Activated naive CD8-positive, alpha-beta T cell treated with anti-CD3 and anti-CD28 coated beads, Interleukin-2, amount 10 ng/mL, durations not matched to agents 7 days and 5 days (primary cell): ENCODE measurements at regions of chr15 and their contacts with region 1.

Region 1: GRCh38 chr15:68053701-68054627 is at the start of gene PIAS1:
- DNase-seq: peak; percentile 94
- ATAC-seq: peak; percentile 91
- H3K4me3 Mint-ChIP-seq: peak within 1 kb of the TSS; percentile 93
- H3K27ac Mint-ChIP-seq: peak within 1 kb of the TSS; percentile 93
- H3K4me1 Mint-ChIP-seq: peaks cover 25% of the 10 kb centered on the region
- H3K27me3 Mint-ChIP-seq: peaks cover 8% of the 10 kb centered on the region
- total RNA-seq, gene PIAS1: 53.8 to 54.3 TPM

Region 2: DNA sequence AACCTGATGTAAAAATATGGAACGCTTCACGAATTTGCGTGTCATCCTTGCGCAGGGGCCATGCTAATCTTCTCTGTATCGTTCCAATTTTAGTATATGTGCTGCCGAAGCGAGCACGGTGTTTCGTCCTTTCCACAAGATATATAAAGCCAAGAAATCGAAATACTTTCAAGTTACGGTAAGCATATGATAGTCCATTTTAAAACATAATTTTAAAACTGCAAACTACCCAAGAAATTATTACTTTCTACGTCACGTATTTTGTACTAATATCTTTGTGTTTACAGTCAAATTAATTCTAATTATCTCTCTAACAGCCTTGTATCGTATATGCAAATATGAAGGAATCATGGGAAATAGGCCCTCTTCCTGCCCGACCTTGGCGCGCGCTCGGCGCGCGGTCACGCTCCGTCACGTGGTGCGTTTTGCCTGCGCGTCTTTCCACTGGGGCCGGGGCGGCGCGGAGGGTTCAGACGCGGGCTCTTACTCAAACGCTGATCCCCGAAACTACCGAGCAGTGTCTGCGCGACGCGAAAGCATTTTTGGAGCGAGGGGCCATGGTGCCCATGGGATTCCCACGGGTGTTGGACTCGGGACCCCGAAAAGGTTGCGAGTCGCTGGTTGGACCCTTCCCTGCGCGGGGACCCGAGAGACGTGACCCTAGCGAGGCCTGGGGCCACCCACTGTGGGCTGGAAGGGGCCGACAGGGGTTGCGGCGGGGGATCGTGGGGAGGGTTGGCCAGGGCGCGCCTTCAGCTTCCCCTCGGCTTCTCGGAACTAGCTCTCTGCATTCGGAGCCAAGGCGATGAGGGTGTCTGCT is 213.8 kb before region 1 on chr15 and contains the start of gene RNU6-1:
- POLR2A ChIA-PET with region 1: interaction called, 10 read pairs
- DNase-seq: peak; percentile 97
- ATAC-seq: peak; percentile 91
- H3K4me3 Mint-ChIP-seq: peak within 1 kb of the TSS; percentile 91
- H3K27ac Mint-ChIP-seq: peak within 1 kb of the TSS; percentile 95
- H3K4me1 Mint-ChIP-seq: peaks cover 25% of the 10 kb centered on the region
- H3K27me3 Mint-ChIP-seq: peaks cover 25% of the 10 kb centered on the region
- total RNA-seq, gene RNU6-1: not detected